ENCODE measurements at regions of chr19 and their contacts with region 1.

Region 1: GRCh38 chr19:10936661-10937084 is 8.1 kb downstream of the TIMM29 start:
- DNase-seq: peak; percentile 78 to 88 (median 79)
- H3K4me3 ChIP-seq: peak overlapping the region in 3 of 7 experiments; percentile 29 to 70 (median 34)
- H3K27ac ChIP-seq: no peak overlapping the region
- H3K4me1 ChIP-seq: peaks cover 0 to 6% (median 3%) of the 10 kb centered on the region in 4 experiments
- H3K27me3 ChIP-seq: no peaks in the 10 kb centered on the region

Region 2: GRCh38 chr19:10653715-10654492 is 282.8 kb before region 1 on chr19 and contains the start of gene ILF3:
- CTCF ChIA-PET with region 1: no interaction called
- POLR2A ChIA-PET with region 1: no interaction called
- DNase-seq: peak; percentile 100
- H3K4me3 ChIP-seq: peak within 1 kb of the TSS; percentile 84 to 98 (median 95)
- H3K27ac ChIP-seq: peak within 1 kb of the TSS; percentile 98 to 99
- H3K4me1 ChIP-seq: peaks cover 0 to 38% (median 32%) of the 10 kb centered on the region in 4 experiments
- H3K27me3 ChIP-seq: no peaks in the 10 kb centered on the region

Region 3: DNA sequence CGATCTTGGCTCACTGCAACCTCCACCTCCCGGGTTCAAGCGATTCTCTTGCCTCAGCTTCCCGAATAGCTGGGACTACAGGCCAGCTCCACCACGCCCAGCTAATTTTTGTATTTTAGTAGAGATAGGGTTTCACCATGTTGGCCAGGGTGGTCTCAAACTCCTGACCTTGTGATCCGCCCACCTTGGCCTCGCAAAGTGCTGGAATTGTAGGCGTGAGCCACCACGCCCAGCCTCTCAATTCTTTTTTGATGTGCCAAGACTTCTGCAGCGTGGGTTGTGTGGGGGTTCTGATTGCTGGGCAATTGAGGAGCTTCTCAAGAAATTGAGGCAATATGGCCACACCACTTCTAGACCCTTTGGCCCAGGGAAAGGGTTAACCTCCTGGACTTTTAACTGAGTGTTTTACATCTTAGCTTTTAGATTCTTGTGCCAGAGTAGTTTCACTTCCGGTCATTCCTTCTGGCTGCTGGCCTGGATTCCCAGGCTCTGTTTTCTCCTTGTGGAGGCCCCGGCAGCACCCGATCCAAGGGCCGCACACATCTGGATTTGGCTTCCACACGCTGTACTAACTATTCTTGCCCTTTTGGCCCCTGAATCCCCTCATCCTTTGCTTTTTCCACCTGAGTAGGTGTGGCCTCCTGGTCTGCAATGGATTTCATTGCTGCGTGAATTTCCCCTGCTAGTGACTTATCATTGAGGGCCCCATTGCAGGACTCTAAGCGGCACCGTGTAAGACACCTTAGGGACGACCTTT is 38.9 kb after region 1 on chr19:
- CTCF ChIA-PET with region 1: interaction called, 10 read pairs
- POLR2A ChIA-PET with region 1: interaction called, 3 read pairs
- DNase-seq: no peak
- H3K4me3 ChIP-seq: no peak overlapping the region
- H3K27ac ChIP-seq: no peak overlapping the region
- H3K4me1 ChIP-seq: peaks cover 0 to 8% (median 1%) of the 10 kb centered on the region in 4 experiments
- H3K27me3 ChIP-seq: no peaks in the 10 kb centered on the region

Region 4: GRCh38 chr19:11011668-11012067 is 75.0 kb after region 1 on chr19:
- CTCF ChIA-PET with region 1: interaction called, 14 read pairs
- POLR2A ChIA-PET with region 1: no interaction called
- DNase-seq: no peak
- H3K4me3 ChIP-seq: no peak overlapping the region
- H3K27ac ChIP-seq: no peak overlapping the region
- H3K4me1 ChIP-seq: no peaks in the 10 kb centered on the region
- H3K27me3 ChIP-seq: no peaks in the 10 kb centered on the region

Region 5: GRCh38 chr19:11035441-11036377 is 99.0 kb after region 1 on chr19:
- CTCF ChIA-PET with region 1: interaction called, 13 read pairs
- POLR2A ChIA-PET with region 1: interaction called, 3 read pairs
- DNase-seq: peak; percentile 87 to 91 (median 88)
- H3K4me3 ChIP-seq: no peak overlapping the region
- H3K27ac ChIP-seq: no peak overlapping the region
- H3K4me1 ChIP-seq: no peaks in the 10 kb centered on the region
- H3K27me3 ChIP-seq: no peaks in the 10 kb centered on the region